Common myeloid progenitor, CD34-positive (primary cell): ENCODE measurements at regions of chr10 and their contacts with region 1.

Region 1: DNA sequence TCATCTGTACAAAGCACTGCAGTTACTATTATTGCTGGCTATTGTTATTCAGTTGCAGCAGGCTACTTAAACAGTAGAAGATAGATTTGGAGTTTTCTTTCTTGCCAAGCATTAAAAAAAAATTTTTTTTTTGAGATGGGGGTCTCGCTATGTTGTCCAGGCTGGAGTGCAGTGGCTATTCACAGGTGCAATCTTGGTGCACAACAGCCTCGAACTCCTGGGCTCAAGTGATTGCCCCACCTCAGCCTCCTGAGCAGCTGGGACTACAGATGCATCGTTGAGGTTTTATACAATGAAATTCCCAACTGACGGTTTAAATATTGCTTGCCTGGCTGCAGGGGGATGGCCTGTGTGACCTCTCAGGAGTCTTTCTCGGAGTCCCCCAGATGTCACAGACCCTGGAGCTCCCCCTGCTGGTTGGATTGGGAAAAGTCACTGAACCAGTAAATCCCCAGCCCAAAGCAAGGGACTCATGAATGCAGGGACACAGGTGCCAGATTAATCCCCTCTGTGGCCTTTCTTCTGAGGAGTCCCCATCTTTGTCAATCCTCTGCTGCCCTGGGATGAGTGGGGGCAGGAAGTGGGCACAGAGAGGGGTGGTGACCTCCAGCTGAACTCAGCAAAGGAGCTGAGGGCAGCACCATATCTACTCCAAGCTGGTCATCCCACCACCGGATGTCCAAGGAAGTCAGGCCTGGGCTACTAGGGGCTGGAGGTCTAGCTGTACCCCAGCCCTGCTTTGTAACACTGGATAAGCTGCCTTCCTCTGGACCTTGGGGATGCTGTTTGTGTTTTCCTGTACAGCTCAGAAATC is 149.6 kb downstream of the C10orf105 start:
- DNase-seq: peak; percentile 46 to 73 (median 59)
- H3K4me3 ChIP-seq: no peak overlapping the region
- H3K27ac ChIP-seq: no peak overlapping the region
- H3K4me1 ChIP-seq: no peaks in the 10 kb centered on the region
- H3K27me3 ChIP-seq: peaks cover 0 to 5% (median 0%) of the 10 kb centered on the region in 5 experiments

Region 2: GRCh38 chr10:71319042-71319799 is 250.8 kb before region 1 on chr10 and contains the start of gene SLC29A3:
- CTCF ChIA-PET with region 1: interaction called, 39 read pairs
- POLR2A ChIA-PET with region 1: interaction called, 4 read pairs
- DNase-seq: peak; percentile 82 to 91 (median 85)
- H3K4me3 ChIP-seq: peak within 1 kb of the TSS; percentile 58 to 88 (median 81)
- H3K27ac ChIP-seq: peak within 1 kb of the TSS; percentile 7 to 50
- H3K4me1 ChIP-seq: peaks cover 3 to 43% (median 37%) of the 10 kb centered on the region in 4 experiments
- H3K27me3 ChIP-seq: no peaks in the 10 kb centered on the region

Region 3: GRCh38 chr10:71390461-71390835 is 179.5 kb before region 1 on chr10:
- CTCF ChIA-PET with region 1: interaction called, 66 read pairs
- POLR2A ChIA-PET with region 1: no interaction called
- DNase-seq: peak; percentile 36 to 61 (median 55)
- H3K4me3 ChIP-seq: peak overlapping the region in 1 of 7 experiments; percentile 19
- H3K27ac ChIP-seq: no peak overlapping the region
- H3K4me1 ChIP-seq: peaks cover 0 to 12% (median 10%) of the 10 kb centered on the region in 4 experiments
- H3K27me3 ChIP-seq: peaks cover 0 to 10% (median 0%) of the 10 kb centered on the region in 5 experiments

Region 4: DNA sequence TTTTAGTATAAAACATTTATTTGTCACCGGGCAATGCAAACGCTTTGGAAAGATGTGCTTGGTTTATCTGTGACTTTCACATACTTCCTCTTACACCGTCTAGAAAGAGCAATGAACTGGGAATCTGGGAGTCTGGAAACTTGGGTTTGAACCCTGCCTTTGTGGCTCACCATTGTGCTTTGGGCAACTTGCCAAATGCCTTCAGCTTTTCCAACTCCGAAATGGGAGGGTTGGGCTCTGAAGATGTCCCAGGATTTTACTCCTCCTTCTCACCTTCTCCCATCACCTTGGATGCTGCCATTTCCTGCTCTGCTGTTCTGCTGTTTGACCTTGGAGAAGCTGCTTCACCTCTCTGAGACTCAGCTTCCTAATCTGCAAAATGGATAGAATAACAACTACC is 62.2 kb before region 1 on chr10:
- CTCF ChIA-PET with region 1: no interaction called
- POLR2A ChIA-PET with region 1: no interaction called
- DNase-seq: no peak
- H3K4me3 ChIP-seq: no peak overlapping the region
- H3K27ac ChIP-seq: no peak overlapping the region
- H3K4me1 ChIP-seq: peaks cover 0 to 12% (median 3%) of the 10 kb centered on the region in 4 experiments
- H3K27me3 ChIP-seq: no peaks in the 10 kb centered on the region

Region 5: GRCh38 chr10:71528371-71529206 is 41.4 kb before region 1 on chr10:
- CTCF ChIA-PET with region 1: interaction called, 10 read pairs
- POLR2A ChIA-PET with region 1: no interaction called
- DNase-seq: no peak
- H3K4me3 ChIP-seq: no peak overlapping the region
- H3K27ac ChIP-seq: no peak overlapping the region
- H3K4me1 ChIP-seq: peaks cover 0 to 5% (median under 1%) of the 10 kb centered on the region in 4 experiments
- H3K27me3 ChIP-seq: no peaks in the 10 kb centered on the region

Region 6: GRCh38 chr10:71608819-71609768 is 39.1 kb after region 1 on chr10:
- CTCF ChIA-PET with region 1: interaction called, 17 read pairs
- POLR2A ChIA-PET with region 1: no interaction called
- DNase-seq: peak; percentile 74 to 86 (median 82)
- H3K4me3 ChIP-seq: no peak overlapping the region
- H3K27ac ChIP-seq: no peak overlapping the region
- H3K4me1 ChIP-seq: peaks cover 0 to 9% (median 6%) of the 10 kb centered on the region in 4 experiments
- H3K27me3 ChIP-seq: no peaks in the 10 kb centered on the region